Endothelial cell of umbilical vein (primary cell): ENCODE measurements at regions of chr14 and their contacts with region 1.

Region 1: DNA sequence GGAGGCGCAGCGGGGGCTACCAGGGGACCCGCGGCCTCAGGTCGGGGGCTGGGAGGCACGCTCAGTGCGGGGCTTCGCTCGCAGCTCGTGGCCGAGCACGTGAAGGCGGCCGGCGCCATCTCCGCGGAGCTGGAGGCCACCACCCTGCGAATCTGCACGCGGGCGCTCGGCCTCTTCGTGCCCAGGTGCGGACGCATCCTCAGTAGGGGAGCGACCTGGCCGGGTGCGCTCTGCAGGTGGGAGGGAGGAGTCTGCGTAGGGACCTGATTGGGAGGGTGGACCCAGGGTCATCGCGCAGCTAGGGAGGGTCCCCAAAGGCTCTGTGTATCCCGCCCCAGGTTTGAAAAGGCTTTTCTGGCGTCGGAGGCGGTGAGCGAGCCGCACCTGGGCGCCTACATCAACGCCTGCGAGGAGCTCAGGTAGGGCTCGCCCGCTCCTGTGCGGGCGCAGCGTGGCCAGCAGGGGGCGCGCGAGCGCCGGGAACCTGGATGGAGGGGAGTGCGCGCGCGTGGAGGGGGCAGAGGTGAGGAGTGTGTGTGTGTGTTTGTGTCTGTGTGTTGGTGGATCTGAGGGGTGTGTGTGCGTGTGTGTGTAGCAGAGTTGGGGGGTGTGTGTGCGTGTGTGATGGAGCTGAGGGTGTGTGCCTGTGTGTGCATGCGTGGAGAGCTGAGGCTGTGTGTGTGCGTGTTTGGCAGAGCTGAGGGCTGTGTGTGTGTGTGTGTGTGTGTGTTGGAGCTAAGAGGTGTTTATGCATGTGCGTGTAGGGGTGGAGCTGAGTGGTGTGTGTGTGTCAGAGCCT is 10.3 kb downstream of the EXOC3L4 start:
- DNase-seq: no peak
- H3K4me3 ChIP-seq: no peak overlapping the region
- H3K27ac ChIP-seq: no peak overlapping the region
- H3K4me1 ChIP-seq: peaks cover 3% of the 10 kb centered on the region
- H3K27me3 ChIP-seq: peaks cover 28 to 29% of the 10 kb centered on the region in 2 experiments
- CTCF ChIP-seq: peak; percentile 99
- POLR2A ChIP-seq: no peak

Region 2: DNA sequence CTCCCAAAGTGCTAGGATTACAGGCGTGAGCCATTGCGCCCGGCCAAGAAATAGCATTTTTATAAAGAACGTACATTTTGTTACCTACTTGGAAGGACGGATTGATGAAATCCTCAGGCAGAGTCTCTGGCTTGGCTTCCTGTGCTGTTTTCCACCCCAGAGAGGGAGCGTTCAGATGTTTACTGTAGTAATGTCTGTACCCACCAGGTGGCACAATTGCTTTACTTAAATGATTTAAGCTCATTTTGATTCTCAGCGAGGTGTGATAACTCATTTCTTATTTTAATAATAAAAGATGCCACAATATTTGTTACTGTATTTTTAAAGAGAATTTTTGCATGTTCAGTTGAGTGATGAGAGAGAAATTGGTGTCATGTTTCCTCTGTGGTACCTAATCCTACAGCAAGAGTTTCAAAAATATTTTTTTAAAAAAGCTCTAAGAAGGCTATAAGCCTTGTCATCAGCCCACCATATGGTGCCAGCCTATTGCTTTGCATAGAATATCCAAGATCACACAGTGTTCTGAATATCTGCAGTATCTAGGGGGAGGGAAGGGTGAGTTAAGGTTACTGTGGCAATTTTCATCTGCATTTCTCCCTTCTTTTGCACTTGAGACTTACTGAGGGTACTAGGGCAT is 410.2 kb before region 1 on chr14:
- CTCF ChIA-PET with region 1: interaction called, 10 read pairs
- POLR2A ChIA-PET with region 1: no interaction called
- dilution Hi-C with region 1: no loop called
- intact Hi-C with region 1: no loop called
- DNase-seq: peak; percentile 77
- H3K4me3 ChIP-seq: no peak overlapping the region
- H3K27ac ChIP-seq: no peak overlapping the region
- H3K4me1 ChIP-seq: peaks cover 13% of the 10 kb centered on the region
- H3K27me3 ChIP-seq: no peaks in the 10 kb centered on the region
- CTCF ChIP-seq: peak; percentile 50 to 60
- POLR2A ChIP-seq: no peak

Region 3: DNA sequence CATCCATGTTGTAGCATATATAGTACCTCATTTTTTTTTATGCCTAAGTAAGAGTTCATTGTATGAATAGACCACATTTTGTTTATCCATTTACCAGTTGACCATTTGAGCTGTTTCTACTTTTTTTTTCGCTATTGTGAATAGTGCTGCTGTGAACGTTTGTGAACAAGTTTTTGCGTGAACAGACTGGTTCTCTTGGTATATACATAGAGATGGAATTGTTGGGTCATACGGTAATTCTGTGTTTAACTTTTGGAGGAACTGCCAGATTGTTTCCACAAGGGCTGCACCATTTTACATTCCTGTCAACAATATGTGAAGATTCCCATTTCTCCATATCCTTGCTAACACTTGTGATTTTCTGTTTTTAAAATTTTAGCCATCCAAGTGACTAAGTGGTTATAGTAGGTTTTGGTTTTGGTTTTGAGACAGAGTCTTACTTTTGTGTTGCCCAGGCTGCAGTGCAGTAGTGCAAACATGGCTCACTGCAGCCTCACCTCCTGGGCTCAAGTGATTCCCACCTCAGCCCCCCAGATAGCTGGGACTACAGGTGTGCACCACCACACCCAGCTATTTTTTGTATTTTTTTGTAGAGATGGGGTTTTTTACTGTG is 250.7 kb before region 1 on chr14:
- CTCF ChIA-PET with region 1: no interaction called
- POLR2A ChIA-PET with region 1: no interaction called
- dilution Hi-C with region 1: no loop called
- intact Hi-C with region 1: no loop called
- DNase-seq: no peak
- H3K4me3 ChIP-seq: no peak overlapping the region
- H3K27ac ChIP-seq: no peak overlapping the region
- H3K4me1 ChIP-seq: peaks cover 4% of the 10 kb centered on the region
- H3K27me3 ChIP-seq: no peaks in the 10 kb centered on the region
- CTCF ChIP-seq: no peak
- POLR2A ChIP-seq: no peak

Region 4: DNA sequence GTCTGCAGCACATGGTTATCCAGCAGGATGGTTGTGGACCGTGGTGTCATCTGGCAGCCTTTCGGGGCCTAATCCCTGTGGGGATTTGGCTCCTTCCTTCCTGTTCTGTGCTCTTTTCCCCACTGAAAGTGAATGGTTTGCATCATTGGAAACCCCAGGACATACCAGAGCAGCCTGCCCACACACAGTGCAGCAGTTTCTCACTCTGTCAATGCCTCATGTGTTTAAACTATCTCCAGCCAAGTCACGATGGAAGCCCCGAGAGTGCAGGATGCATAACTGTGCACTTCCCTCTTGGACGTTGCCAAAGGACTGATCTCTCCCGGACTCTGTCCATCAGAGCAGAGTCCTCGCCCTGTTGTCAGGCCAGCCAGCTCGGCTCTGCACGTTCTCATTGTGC is 211.4 kb before region 1 on chr14:
- CTCF ChIA-PET with region 1: no interaction called
- POLR2A ChIA-PET with region 1: no interaction called
- dilution Hi-C with region 1: no loop called
- intact Hi-C with region 1: no loop called
- DNase-seq: no peak
- H3K4me3 ChIP-seq: no peak overlapping the region
- H3K27ac ChIP-seq: no peak overlapping the region
- H3K4me1 ChIP-seq: no peaks in the 10 kb centered on the region
- H3K27me3 ChIP-seq: no peaks in the 10 kb centered on the region
- CTCF ChIP-seq: no peak
- POLR2A ChIP-seq: no peak

Region 5: GRCh38 chr14:102982852-102983470 is 121.9 kb before region 1 on chr14:
- CTCF ChIA-PET with region 1: no interaction called
- POLR2A ChIA-PET with region 1: no interaction called
- dilution Hi-C with region 1: no loop called
- intact Hi-C with region 1: no loop called
- DNase-seq: no peak
- H3K4me3 ChIP-seq: no peak overlapping the region
- H3K27ac ChIP-seq: no peak overlapping the region
- H3K4me1 ChIP-seq: no peaks in the 10 kb centered on the region
- H3K27me3 ChIP-seq: no peaks in the 10 kb centered on the region
- CTCF ChIP-seq: no peak
- POLR2A ChIP-seq: no peak

Region 6: DNA sequence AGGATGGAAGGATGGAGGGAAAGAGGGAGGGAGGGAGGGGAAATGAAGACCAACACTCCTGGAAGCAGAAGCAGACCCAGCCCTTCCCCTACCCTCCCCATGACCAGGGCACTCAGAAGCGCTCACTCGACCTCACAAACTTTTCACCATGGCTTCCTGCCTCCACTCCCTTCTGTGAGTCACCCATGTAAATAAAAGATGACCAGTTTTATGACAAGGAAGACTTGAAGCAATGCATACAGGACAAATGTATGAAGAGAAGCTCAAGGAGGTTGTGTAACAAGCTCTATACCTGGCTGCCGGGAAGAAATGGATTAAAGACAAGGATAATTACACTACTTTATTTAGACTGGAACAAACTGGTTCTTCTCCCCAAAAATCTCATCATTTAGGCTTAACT is 111.3 kb before region 1 on chr14:
- CTCF ChIA-PET with region 1: no interaction called
- POLR2A ChIA-PET with region 1: no interaction called
- dilution Hi-C with region 1: no loop called
- intact Hi-C with region 1: no loop called
- DNase-seq: peak; percentile 49
- H3K4me3 ChIP-seq: no peak overlapping the region
- H3K27ac ChIP-seq: no peak overlapping the region
- H3K4me1 ChIP-seq: peaks cover 12% of the 10 kb centered on the region
- H3K27me3 ChIP-seq: no peaks in the 10 kb centered on the region
- CTCF ChIP-seq: no peak
- POLR2A ChIP-seq: no peak

Region 7: GRCh38 chr14:103115883-103116572 is 11.2 kb after region 1 on chr14:
- CTCF ChIA-PET with region 1: interaction called, 33 read pairs
- POLR2A ChIA-PET with region 1: interaction called, 6 read pairs
- dilution Hi-C with region 1: no loop called
- intact Hi-C with region 1: no loop called
- DNase-seq: no peak
- H3K4me3 ChIP-seq: no peak overlapping the region
- H3K27ac ChIP-seq: no peak overlapping the region
- H3K4me1 ChIP-seq: peaks cover 7% of the 10 kb centered on the region
- H3K27me3 ChIP-seq: no peaks in the 10 kb centered on the region
- CTCF ChIP-seq: no peak
- POLR2A ChIP-seq: no peak

Region 8: DNA sequence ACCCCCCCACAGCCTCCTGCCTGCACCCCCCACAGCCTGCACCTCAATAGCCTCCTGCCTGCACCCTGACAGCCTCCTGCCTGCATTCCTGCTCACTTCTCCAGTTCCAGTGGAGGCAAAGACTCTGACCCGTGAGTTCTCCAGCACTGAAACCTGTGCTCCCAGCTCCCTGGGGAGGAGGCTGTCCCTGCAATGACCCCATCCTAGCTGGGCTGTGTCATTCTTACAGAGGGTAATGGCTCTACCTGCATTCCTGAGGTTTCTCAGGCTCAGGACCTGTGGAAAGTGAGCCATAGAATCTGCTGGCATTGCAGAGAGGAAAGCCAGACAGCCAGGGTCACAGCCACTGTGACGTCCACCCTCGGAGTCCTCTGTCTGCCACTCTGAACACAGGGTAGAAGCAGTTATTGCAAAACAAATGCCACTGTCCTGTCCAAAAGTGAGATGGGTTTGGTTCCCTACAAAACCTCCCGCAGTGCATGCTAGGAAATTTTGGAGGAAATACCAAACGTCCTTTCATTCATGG is 56.1 kb after region 1 on chr14:
- CTCF ChIA-PET with region 1: interaction called, 18 read pairs
- POLR2A ChIA-PET with region 1: no interaction called
- dilution Hi-C with region 1: no loop called
- intact Hi-C with region 1: no loop called
- DNase-seq: no peak
- H3K4me3 ChIP-seq: no peak overlapping the region
- H3K27ac ChIP-seq: no peak overlapping the region
- H3K4me1 ChIP-seq: no peaks in the 10 kb centered on the region
- H3K27me3 ChIP-seq: peaks cover 14 to 16% of the 10 kb centered on the region in 2 experiments
- CTCF ChIP-seq: no peak
- POLR2A ChIP-seq: no peak

Region 9: DNA sequence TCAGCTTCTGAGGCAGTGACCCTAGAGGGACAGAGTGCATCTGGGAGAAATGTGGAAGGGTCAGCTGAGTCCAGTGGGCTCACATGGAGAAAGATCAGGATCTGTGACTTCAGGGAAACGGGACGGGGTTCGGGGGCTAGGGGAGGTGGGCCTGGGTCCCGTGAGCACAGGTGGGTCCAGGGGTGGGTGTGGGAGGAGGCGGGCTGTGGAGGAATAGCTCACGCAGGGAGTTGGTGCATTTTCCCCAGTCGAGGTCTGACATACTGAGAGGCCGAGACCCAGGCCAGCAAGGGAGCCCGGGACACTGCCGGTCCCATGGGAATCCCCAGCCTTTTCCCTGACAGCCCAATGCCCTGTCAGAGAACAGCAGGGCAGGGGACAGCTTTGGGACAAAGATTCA is 111.5 kb after region 1 on chr14:
- CTCF ChIA-PET with region 1: interaction called, 19 read pairs
- POLR2A ChIA-PET with region 1: no interaction called
- dilution Hi-C with region 1: no loop called
- intact Hi-C with region 1: no loop called
- DNase-seq: no peak
- H3K4me3 ChIP-seq: no peak overlapping the region
- H3K27ac ChIP-seq: no peak overlapping the region
- H3K4me1 ChIP-seq: no peaks in the 10 kb centered on the region
- H3K27me3 ChIP-seq: peaks cover 11 to 29% of the 10 kb centered on the region in 2 experiments
- CTCF ChIP-seq: no peak
- POLR2A ChIP-seq: no peak

Region 10: DNA sequence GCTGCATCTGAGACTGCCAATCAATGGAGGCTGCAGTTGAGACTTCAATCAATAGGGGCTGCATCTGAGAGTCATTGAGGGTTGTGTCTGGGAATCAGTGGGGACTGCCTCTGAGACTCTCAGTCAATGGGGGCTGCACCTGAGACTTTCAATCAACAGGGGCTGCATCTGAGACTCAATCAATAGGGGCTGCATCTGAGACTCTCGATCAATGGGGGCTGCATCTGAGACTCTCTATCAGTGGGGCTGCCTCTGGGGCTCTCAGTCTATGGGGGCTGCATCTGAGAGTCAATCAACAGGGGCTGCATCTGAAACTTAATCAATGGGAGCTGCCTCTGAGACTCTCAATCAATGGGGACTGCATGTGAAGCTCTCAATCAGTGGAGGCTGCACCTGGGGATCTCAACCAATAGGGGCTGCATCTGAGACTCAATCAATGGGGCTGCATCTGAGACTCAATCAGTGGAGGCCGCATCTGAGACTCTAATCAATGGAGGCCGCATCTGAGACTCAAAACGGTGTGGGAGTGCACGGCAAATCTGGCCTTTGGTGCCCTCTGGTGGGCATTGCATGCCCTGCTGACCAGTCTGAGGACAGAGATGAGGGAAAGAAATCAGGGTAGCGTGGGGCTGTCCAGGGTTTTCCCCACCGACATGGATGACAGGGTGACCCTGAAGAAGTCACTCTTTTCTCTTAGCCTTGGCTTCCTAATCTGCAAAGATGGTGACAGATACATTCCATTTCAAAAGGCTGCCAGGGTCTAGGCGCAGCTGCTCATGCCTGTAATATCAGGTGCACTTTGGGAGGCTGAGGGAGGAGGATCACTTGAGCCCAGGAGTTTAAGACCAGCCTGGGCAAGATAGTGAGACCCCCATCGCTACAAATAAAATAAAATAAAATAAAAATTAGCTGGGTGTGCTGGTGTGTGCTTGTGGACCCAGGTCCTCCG is 187.8 kb after region 1 on chr14:
- CTCF ChIA-PET with region 1: interaction called, 257 read pairs
- POLR2A ChIA-PET with region 1: no interaction called
- dilution Hi-C with region 1: no loop called
- intact Hi-C with region 1: loop called (anchors 1 kb)
- DNase-seq: peak; percentile 53
- H3K4me3 ChIP-seq: no peak overlapping the region
- H3K27ac ChIP-seq: no peak overlapping the region
- H3K4me1 ChIP-seq: no peaks in the 10 kb centered on the region
- H3K27me3 ChIP-seq: peaks cover 0 to 4% of the 10 kb centered on the region in 2 experiments
- CTCF ChIP-seq: peak; percentile 90
- POLR2A ChIP-seq: no peak